CD4-positive, alpha-beta memory T cell (primary cell): ENCODE measurements at regions of chr5 and their contacts with region 1.

Region 1: GRCh38 chr5:157575381-157576020 is at the start of gene ADAM19:
- DNase-seq: peak; percentile 46 to 58 (median 52)
- H3K4me3 ChIP-seq: peak within 1 kb of the TSS; percentile 82 to 95
- H3K4me3 Mint-ChIP-seq: peak within 1 kb of the TSS; percentile 94 to 100 (median 98)
- H3K27ac ChIP-seq: peak within 1 kb of the TSS; percentile 73
- H3K27ac Mint-ChIP-seq: peak within 1 kb of the TSS; percentile 89 to 98 (median 95)
- H3K4me1 ChIP-seq: peaks cover 51% of the 10 kb centered on the region
- H3K4me1 Mint-ChIP-seq: peaks cover 30 to 83% (median 47%) of the 10 kb centered on the region in 4 donors
- H3K27me3 ChIP-seq: no peaks in the 10 kb centered on the region
- H3K27me3 Mint-ChIP-seq: no peaks in the 10 kb centered on the region
- total RNA-seq, gene ADAM19: 31.5 to 33.9 TPM

Region 2: GRCh38 chr5:157548513-157549297 is 26.8 kb before region 1 on chr5:
- CTCF ChIA-PET with region 1: interaction called, 7 read pairs
- POLR2A ChIA-PET with region 1: interaction called, 220 read pairs
- intact Hi-C with region 1: loop called (anchors 2 kb)
- DNase-seq: no peak
- H3K4me3 ChIP-seq: no peak overlapping the region
- H3K4me3 Mint-ChIP-seq: peak overlapping the region; percentile 31 to 91 (median 79)
- H3K27ac ChIP-seq: peak overlapping the region; percentile 44
- H3K27ac Mint-ChIP-seq: peak overlapping the region; percentile 93 to 98 (median 96)
- H3K4me1 ChIP-seq: peaks cover 100% of the 10 kb centered on the region
- H3K4me1 Mint-ChIP-seq: peaks cover 79 to 94% (median 89%) of the 10 kb centered on the region in 4 donors
- H3K27me3 ChIP-seq: no peaks in the 10 kb centered on the region
- H3K27me3 Mint-ChIP-seq: no peaks in the 10 kb centered on the region

Region 3: GRCh38 chr5:157558041-157558595 is 17.4 kb before region 1 on chr5:
- CTCF ChIA-PET with region 1: interaction called, 22 read pairs
- POLR2A ChIA-PET with region 1: interaction called, 125 read pairs
- intact Hi-C with region 1: loop called (anchors 2 kb)
- DNase-seq: no peak
- H3K4me3 ChIP-seq: no peak overlapping the region
- H3K4me3 Mint-ChIP-seq: peak overlapping the region in 4 of 8 donors; percentile 5 to 38 (median 12)
- H3K27ac ChIP-seq: no peak overlapping the region
- H3K27ac Mint-ChIP-seq: peak overlapping the region in 6 of 7 donors; percentile 56 to 84 (median 72)
- H3K4me1 ChIP-seq: peaks cover 89% of the 10 kb centered on the region
- H3K4me1 Mint-ChIP-seq: peaks cover 66 to 88% (median 80%) of the 10 kb centered on the region in 4 donors
- H3K27me3 ChIP-seq: no peaks in the 10 kb centered on the region
- H3K27me3 Mint-ChIP-seq: no peaks in the 10 kb centered on the region

Region 4: DNA sequence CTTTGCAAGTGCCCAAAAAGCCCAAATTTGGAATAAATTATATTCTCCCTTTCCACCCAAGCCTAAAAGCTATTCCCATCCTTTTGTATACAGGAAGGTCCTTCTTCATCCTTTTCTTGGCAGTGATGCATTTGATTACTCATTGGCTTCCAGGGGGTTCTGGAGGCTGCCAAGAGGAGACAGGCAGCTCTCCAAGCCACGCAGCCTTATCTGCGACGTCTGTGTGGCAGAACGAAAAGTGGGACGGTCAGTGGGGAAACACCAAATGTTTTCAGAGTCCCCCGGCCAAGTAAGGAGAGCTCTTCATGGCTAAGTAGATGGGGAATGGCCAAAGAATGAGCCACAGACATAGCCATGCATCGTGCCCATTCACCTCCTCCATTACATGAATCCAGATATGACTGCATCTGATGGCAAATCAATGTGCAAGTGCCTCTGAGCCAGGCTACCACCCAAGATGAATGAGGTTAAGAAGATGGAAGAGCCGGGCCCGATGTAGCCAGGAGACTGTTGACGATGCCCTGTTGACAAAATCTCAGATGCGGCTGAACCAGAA is 12.1 kb before region 1 on chr5:
- CTCF ChIA-PET with region 1: interaction called, 22 read pairs
- POLR2A ChIA-PET with region 1: interaction called, 125 read pairs
- intact Hi-C with region 1: no loop called
- DNase-seq: no peak
- H3K4me3 ChIP-seq: no peak overlapping the region
- H3K4me3 Mint-ChIP-seq: peak overlapping the region in 5 of 8 donors; percentile 1 to 64 (median 55)
- H3K27ac ChIP-seq: no peak overlapping the region
- H3K27ac Mint-ChIP-seq: peak overlapping the region; percentile 25 to 89 (median 72)
- H3K4me1 ChIP-seq: peaks cover 83% of the 10 kb centered on the region
- H3K4me1 Mint-ChIP-seq: peaks cover 61 to 89% (median 76%) of the 10 kb centered on the region in 4 donors
- H3K27me3 ChIP-seq: no peaks in the 10 kb centered on the region
- H3K27me3 Mint-ChIP-seq: no peaks in the 10 kb centered on the region

Region 5: GRCh38 chr5:157596487-157596886 is 21.0 kb after region 1 on chr5:
- CTCF ChIA-PET with region 1: interaction called, 4 read pairs
- POLR2A ChIA-PET with region 1: interaction called, 21 read pairs
- intact Hi-C with region 1: no loop called
- DNase-seq: peak in 1 of 5 donors; percentile 42
- H3K4me3 ChIP-seq: no peak overlapping the region
- H3K4me3 Mint-ChIP-seq: peak overlapping the region in 7 of 8 donors; percentile 43 to 78 (median 65)
- H3K27ac ChIP-seq: no peak overlapping the region
- H3K27ac Mint-ChIP-seq: peak overlapping the region; percentile 24 to 86 (median 46)
- H3K4me1 ChIP-seq: peaks cover 87% of the 10 kb centered on the region
- H3K4me1 Mint-ChIP-seq: peaks cover 55 to 87% (median 73%) of the 10 kb centered on the region in 4 donors
- H3K27me3 ChIP-seq: no peaks in the 10 kb centered on the region
- H3K27me3 Mint-ChIP-seq: no peaks in the 10 kb centered on the region

Region 6: DNA sequence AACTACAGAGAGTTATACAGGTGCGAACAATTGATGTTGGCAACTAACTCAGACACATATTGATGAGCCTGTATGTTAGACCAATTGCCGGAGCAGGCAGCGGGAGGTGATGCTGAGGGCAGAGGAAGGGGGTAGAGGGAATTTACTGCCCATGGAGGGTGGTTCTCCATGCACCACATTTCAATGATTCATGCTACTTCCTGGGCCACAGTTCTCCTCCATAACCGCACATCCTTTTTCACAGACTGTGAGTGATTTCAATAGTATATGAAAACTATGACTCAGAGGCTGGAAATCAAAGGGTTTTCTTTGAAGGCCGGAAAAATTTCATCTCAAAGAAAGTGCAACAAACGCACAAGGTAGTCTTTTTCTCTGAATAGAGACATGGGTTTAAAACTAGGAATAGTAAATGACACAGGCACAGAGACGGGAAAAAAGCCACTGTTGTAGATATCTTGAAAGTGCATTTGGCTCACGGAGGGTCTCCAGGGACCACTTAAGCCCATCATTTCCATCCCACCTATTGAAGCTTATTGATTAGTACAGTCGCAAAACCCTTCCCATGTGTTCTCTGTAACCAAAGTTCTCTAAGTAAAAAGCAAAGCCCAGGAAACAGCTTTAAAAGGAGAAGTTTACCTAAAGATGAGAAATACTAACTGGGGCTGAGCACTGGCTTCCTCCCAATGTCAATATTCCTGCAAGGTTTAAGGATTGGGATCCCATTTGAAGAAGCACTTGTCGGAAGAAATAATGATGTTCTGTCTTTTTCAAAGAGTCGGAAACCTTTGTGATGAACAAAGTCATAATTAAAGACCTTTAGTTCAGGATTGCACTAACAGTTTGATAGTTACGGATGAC is 28.1 kb after region 1 on chr5:
- CTCF ChIA-PET with region 1: no interaction called
- POLR2A ChIA-PET with region 1: interaction called, 5 read pairs
- intact Hi-C with region 1: loop called (anchors 2 kb)
- DNase-seq: peak; percentile 72 to 93 (median 75)
- H3K4me3 ChIP-seq: no peak overlapping the region
- H3K4me3 Mint-ChIP-seq: peak overlapping the region; percentile 39 to 84 (median 70)
- H3K27ac ChIP-seq: peak overlapping the region; percentile 68
- H3K27ac Mint-ChIP-seq: peak overlapping the region; percentile 84 to 96 (median 86)
- H3K4me1 ChIP-seq: peaks cover 90% of the 10 kb centered on the region
- H3K4me1 Mint-ChIP-seq: peaks cover 45 to 69% (median 60%) of the 10 kb centered on the region in 4 donors
- H3K27me3 ChIP-seq: no peaks in the 10 kb centered on the region
- H3K27me3 Mint-ChIP-seq: no peaks in the 10 kb centered on the region

Region 7: GRCh38 chr5:157651623-157652549 is 76.4 kb after region 1 on chr5 and contains the start of gene SOX30:
- CTCF ChIA-PET with region 1: no interaction called
- POLR2A ChIA-PET with region 1: interaction called, 6 read pairs
- intact Hi-C with region 1: loop called (anchors 5 kb)
- DNase-seq: peak; percentile 85 to 89 (median 86)
- H3K4me3 ChIP-seq: peak within 1 kb of the TSS in 1 of 2 donors; percentile 51
- H3K4me3 Mint-ChIP-seq: peak within 1 kb of the TSS; percentile 78 to 89 (median 84)
- H3K27ac ChIP-seq: peak within 1 kb of the TSS; percentile 52
- H3K27ac Mint-ChIP-seq: peak within 1 kb of the TSS; percentile 65 to 91 (median 86)
- H3K4me1 ChIP-seq: peaks cover 18% of the 10 kb centered on the region
- H3K4me1 Mint-ChIP-seq: peaks cover 11 to 26% (median 18%) of the 10 kb centered on the region in 4 donors
- H3K27me3 ChIP-seq: no peaks in the 10 kb centered on the region
- H3K27me3 Mint-ChIP-seq: no peaks in the 10 kb centered on the region
- total RNA-seq, gene SOX30: 0.14 to 0.15 TPM

Region 8: DNA sequence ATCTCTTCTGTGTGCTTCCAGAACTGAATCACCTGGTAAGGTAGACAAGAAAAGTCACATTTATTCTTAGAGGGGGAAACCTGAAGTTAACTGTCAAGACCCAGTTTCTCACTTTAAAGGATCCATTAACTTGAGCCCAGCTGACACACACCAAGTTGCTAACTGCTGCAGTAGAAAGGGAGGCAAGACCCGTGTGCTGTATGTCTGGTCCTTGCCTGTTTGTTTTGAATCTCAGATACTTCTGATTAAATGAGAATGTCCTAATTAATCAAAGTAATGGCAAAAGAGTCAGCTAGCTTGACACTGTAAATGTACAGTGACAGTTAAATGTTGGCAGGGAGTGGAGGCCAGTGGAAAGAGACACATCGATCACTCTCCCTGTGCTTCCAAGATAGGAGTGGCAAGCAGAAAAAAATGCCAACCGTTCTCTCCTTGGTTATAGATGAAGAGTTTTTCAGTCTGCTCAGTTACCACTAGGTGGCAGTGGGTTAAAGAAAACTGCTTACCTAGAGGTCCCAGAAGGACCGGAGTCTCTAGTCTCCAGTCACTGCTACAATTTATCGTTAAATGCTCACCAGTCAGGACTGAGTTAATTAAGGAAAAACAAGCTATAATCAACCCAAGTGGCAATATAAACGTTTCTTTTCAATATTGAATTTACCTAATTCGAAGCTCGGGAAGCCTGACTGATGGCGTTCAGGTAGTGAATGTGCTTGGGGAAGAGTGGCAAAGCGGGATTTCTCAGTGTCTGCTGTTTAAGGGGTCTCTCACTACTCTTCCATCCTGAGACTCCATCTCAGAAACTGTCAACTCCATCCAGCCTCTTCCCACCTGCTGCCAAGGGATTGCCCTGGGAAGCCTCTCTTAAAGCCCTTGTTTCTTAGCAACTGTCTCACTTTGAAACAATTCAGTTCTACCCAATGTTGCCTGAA is 186.5 kb after region 1 on chr5:
- CTCF ChIA-PET with region 1: no interaction called
- POLR2A ChIA-PET with region 1: no interaction called
- intact Hi-C with region 1: no loop called
- DNase-seq: peak in 4 of 5 donors; percentile 29 to 46 (median 41)
- H3K4me3 ChIP-seq: no peak overlapping the region
- H3K4me3 Mint-ChIP-seq: no peak overlapping the region
- H3K27ac ChIP-seq: no peak overlapping the region
- H3K27ac Mint-ChIP-seq: no peak overlapping the region
- H3K4me1 ChIP-seq: peaks cover 5% of the 10 kb centered on the region
- H3K4me1 Mint-ChIP-seq: peaks cover 0 to 4% (median 0%) of the 10 kb centered on the region in 4 donors
- H3K27me3 ChIP-seq: no peaks in the 10 kb centered on the region
- H3K27me3 Mint-ChIP-seq: no peaks in the 10 kb centered on the region